OCI-LY7 (cell line): ENCODE measurements at regions of chr3 and their contacts with region 1.

Region 1: GRCh38 chr3:71583566-71584449 is at the start of gene FOXP1:
- DNase-seq: peak; percentile 81
- H3K4me3 ChIP-seq: peak within 1 kb of the TSS; percentile 90
- H3K27ac ChIP-seq: peak within 1 kb of the TSS; percentile 88
- H3K4me1 ChIP-seq: peaks cover 35% of the 10 kb centered on the region
- CTCF ChIP-seq: no peak
- total RNA-seq, gene FOXP1: 67.2 and 87.3 TPM in 2 replicates

Region 2: GRCh38 chr3:70771426-70772147 is 812.2 kb before region 1 on chr3:
- CTCF ChIA-PET with region 1: no interaction called
- POLR2A ChIA-PET with region 1: no interaction called
- intact Hi-C with region 1: no loop called
- DNase-seq: no peak
- H3K4me3 ChIP-seq: no peak overlapping the region
- H3K27ac ChIP-seq: no peak overlapping the region
- H3K4me1 ChIP-seq: no peaks in the 10 kb centered on the region
- CTCF ChIP-seq: no peak

Region 3: GRCh38 chr3:71064288-71064955 is 519.4 kb before region 1 on chr3:
- CTCF ChIA-PET with region 1: no interaction called
- POLR2A ChIA-PET with region 1: interaction called, 4 read pairs
- intact Hi-C with region 1: loop called (anchors 1 kb)
- DNase-seq: peak; percentile 57
- H3K4me3 ChIP-seq: peak overlapping the region; percentile 70
- H3K27ac ChIP-seq: peak overlapping the region; percentile 48
- H3K4me1 ChIP-seq: peaks cover 63% of the 10 kb centered on the region
- CTCF ChIP-seq: no peak

Region 4: DNA sequence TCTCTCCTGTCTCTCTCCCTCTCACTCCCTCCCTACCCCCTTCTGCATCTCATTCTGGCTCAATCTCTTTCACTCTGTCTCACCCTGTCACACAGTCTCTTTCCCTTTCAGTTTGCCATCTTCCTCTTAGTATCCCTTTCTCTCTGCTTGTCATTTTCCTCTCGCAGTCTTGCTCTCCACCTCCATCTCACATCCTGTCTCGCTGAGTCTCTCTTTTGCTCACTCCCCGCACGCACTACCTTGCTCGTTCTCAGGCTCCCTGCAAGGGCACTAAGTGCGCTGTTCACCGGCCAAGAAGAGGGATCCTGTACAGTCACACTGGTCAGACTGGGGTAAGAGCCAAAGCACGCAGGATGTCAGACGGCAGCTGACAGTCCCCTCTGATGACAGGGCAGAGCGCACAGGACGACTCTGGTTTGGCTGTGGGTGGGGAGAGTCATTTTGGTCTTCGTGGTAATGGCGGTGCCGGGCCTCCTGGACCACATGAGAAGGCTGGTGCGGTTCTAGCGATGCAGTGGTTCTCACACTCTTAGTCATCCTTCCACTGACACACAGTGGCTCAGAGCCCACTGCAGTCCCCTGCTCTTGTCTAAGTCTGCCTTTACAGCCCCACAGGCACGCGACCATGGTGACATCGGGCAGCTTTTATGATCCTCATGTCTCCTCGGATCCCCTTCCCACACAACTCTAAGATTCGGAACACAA is 357.1 kb before region 1 on chr3:
- CTCF ChIA-PET with region 1: no interaction called
- POLR2A ChIA-PET with region 1: interaction called, 4 read pairs
- intact Hi-C with region 1: loop called (anchors 5 kb)
- DNase-seq: no peak
- H3K4me3 ChIP-seq: no peak overlapping the region
- H3K27ac ChIP-seq: no peak overlapping the region
- H3K4me1 ChIP-seq: peaks cover 21% of the 10 kb centered on the region
- CTCF ChIP-seq: no peak

Region 5: GRCh38 chr3:71421820-71422566 is 161.8 kb before region 1 on chr3:
- CTCF ChIA-PET with region 1: no interaction called
- POLR2A ChIA-PET with region 1: interaction called, 3 read pairs
- intact Hi-C with region 1: loop called (anchors 1 kb)
- DNase-seq: peak; percentile 90
- H3K4me3 ChIP-seq: peak overlapping the region; percentile 64
- H3K27ac ChIP-seq: peak overlapping the region; percentile 98
- H3K4me1 ChIP-seq: peaks cover 93% of the 10 kb centered on the region
- CTCF ChIP-seq: no peak

Region 6: GRCh38 chr3:71512000-71512399 is 71.8 kb before region 1 on chr3:
- CTCF ChIA-PET with region 1: interaction called, 5 read pairs
- POLR2A ChIA-PET with region 1: interaction called, 3 read pairs
- intact Hi-C with region 1: loop called (anchors 1 kb)
- DNase-seq: peak; percentile 77
- H3K4me3 ChIP-seq: no peak overlapping the region
- H3K27ac ChIP-seq: peak overlapping the region; percentile 14
- H3K4me1 ChIP-seq: peaks cover 38% of the 10 kb centered on the region
- CTCF ChIP-seq: peak; percentile 83

Region 7: GRCh38 chr3:71652781-71653413 is 69.1 kb after region 1 on chr3:
- CTCF ChIA-PET with region 1: no interaction called
- POLR2A ChIA-PET with region 1: interaction called, 7 read pairs
- intact Hi-C with region 1: loop called (anchors 2 kb)
- DNase-seq: peak; percentile 71
- H3K4me3 ChIP-seq: no peak overlapping the region
- H3K27ac ChIP-seq: no peak overlapping the region
- H3K4me1 ChIP-seq: peaks cover 18% of the 10 kb centered on the region
- CTCF ChIP-seq: peak; percentile 92